ENCODE measurements at regions of chr1 and their contacts with region 1.

Region 1: GRCh38 chr1:181142096-181142958 is 53.8 kb downstream of the IER5 start:
- DNase-seq: peak; percentile 97
- H3K4me3 ChIP-seq: peak overlapping the region in 3 of 8 donors; percentile 10 to 43 (median 17)
- H3K27ac ChIP-seq: peak overlapping the region in 4 of 8 donors; percentile 5 to 40 (median 18)
- H3K4me1 ChIP-seq: peaks cover 16 to 55% (median 41%) of the 10 kb centered on the region in 6 donors
- H3K27me3 ChIP-seq: no peaks in the 10 kb centered on the region
- CTCF ChIP-seq: peak; percentile 97 to 99 (median 98)
- POLR2A ChIP-seq: no peak

Region 2: DNA sequence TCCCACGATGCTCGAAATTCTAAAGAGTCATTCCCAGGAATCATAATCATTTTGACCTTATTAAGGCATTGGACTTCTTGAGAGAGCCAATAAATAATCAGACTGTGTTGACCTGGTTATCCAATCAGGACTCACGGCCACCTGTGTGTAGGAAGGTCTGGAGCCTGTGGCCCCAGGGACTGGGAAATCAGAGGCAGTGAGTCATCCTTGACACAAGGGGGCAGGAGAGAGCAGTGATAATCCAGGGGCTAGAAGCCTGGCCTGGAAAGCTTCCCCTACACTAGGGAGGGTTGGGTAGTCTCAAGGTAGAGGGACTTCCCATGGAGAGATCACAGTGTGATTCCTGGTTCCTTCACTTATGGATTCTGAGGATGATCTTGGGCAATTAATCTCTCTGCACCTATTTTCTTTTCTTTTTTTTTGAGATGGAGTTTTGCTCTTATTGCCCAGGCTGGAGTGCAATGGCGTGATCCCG is 103.9 kb before region 1 on chr1:
- intact Hi-C with region 1: loop called (anchors 5 kb)
- DNase-seq: no peak
- H3K4me3 ChIP-seq: no peak overlapping the region
- H3K27ac ChIP-seq: no peak overlapping the region
- H3K4me1 ChIP-seq: peaks cover 24 to 94% (median 71%) of the 10 kb centered on the region in 6 donors
- H3K27me3 ChIP-seq: no peaks in the 10 kb centered on the region
- CTCF ChIP-seq: peak; percentile 56 to 89 (median 79)
- POLR2A ChIP-seq: no peak

Region 3: DNA sequence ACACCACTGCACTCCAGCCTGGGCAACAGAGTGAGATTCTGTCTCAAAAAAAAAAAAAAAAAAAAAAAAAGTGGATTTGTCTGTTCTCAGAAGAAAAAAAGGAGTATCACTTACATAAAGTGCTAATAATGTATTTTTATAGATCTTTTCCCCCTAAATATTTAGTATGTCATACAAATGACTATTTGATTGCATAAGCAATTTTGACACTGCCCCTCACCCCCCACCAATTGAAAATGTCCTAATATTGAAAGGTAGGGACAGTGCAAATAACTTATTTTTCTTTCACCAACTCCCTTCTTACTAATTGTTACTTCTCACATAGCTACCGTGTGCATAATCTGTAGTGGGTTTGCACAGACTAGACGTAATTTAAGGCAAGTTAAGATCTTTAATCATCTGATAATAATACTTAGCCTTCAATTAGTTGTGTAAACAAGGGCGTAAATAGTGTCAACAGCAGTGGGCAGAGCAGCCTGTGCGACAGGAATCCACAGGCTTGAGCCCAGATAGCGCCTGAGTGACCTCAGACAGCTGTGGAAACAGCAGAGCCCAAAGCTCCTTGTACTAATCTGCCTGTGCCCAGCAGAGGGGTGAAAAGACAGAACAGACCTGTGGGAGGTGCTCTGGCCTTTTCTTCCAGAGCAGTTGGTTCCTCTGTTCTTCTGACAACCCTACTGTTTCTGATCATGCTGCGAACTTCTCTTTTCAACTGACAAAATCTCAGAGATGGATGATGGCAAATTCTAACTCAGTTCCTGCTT is 58.3 kb before region 1 on chr1:
- intact Hi-C with region 1: loop called (anchors 2 kb)
- DNase-seq: peak; percentile 78
- H3K4me3 ChIP-seq: no peak overlapping the region
- H3K27ac ChIP-seq: no peak overlapping the region
- H3K4me1 ChIP-seq: peaks cover 13 to 37% (median 25%) of the 10 kb centered on the region in 6 donors
- H3K27me3 ChIP-seq: no peaks in the 10 kb centered on the region
- CTCF ChIP-seq: peak; percentile 42 to 81 (median 69)
- POLR2A ChIP-seq: no peak